Common myeloid progenitor, CD34-positive (primary cell): ENCODE measurements at regions of chr1 and their contacts with region 1.

Region 1: DNA sequence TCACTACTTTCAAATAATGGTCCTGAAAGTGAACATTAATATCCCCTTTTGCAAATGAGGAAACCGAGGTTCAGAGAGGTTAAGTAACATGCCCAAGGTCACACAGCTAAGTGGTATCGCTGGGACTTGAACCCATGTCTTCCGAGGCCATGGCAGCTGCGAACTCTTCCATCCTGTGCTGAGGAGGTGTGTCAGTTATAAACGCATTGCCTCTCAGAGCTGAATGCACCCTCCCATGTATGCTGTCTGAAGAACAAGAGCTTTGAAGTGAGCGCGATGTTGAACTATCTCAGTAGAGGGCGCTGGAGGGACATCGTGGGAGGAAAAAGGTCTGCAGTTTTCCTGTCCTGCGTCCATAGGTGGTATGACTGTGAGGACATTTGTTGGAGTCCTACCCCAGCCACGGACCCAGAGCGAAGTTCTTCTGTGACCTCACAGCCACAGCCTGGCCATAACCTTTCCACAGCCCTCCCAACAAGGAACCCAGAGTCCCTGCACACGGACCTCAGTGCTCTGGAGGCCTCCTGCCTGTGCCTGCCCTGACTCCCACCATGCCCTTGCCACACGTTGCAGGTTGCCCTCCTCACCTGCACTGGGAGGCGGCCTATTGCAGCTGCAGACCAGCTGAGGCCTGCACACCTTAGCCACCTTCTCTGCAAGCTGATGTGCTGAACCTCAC is 7.5 kb downstream of the MYOC start:
- DNase-seq: peak; percentile 79 to 93 (median 91)
- H3K4me3 ChIP-seq: peak overlapping the region in 2 of 7 experiments; percentile 9 to 59
- H3K27ac ChIP-seq: no peak overlapping the region
- H3K4me1 ChIP-seq: peaks cover 0 to 2% (median 0%) of the 10 kb centered on the region in 4 experiments
- H3K27me3 ChIP-seq: no peaks in the 10 kb centered on the region

Region 2: GRCh38 chr1:171654942-171655745 is 10.2 kb after region 1 on chr1:
- CTCF ChIA-PET with region 1: interaction called, 16 read pairs
- POLR2A ChIA-PET with region 1: no interaction called
- DNase-seq: peak; percentile 62 to 84 (median 81)
- H3K4me3 ChIP-seq: peak overlapping the region in 6 of 7 experiments; percentile 0 to 72 (median 38)
- H3K27ac ChIP-seq: no peak overlapping the region
- H3K4me1 ChIP-seq: peaks cover 0 to 15% (median 9%) of the 10 kb centered on the region in 4 experiments
- H3K27me3 ChIP-seq: peaks cover 0 to 2% (median 0%) of the 10 kb centered on the region in 5 experiments

Region 3: DNA sequence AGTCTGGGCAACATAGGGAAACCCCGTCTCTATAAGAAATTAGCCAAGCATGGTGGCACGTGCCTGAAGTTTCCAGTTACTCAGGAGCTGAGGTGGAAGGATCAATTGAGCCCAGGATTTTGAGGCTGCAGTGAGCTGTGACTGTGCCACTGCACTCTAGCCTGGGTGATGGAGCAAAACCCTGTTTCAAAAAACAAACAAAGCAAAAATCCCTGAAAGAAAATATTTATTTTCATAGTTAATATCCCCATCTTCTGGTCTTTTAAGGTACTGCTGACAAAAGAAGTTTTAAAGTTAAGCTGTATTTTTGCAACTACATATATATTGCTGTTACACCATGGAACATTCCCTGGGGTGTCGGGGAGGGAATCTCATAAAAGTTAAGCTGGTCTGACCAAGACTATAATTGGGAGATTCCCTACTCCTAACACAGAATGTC is 70.9 kb after region 1 on chr1:
- CTCF ChIA-PET with region 1: interaction called, 89 read pairs
- POLR2A ChIA-PET with region 1: no interaction called
- DNase-seq: peak in 2 of 3 donors; percentile 36 to 49
- H3K4me3 ChIP-seq: no peak overlapping the region
- H3K27ac ChIP-seq: no peak overlapping the region
- H3K4me1 ChIP-seq: no peaks in the 10 kb centered on the region
- H3K27me3 ChIP-seq: no peaks in the 10 kb centered on the region

Region 4: DNA sequence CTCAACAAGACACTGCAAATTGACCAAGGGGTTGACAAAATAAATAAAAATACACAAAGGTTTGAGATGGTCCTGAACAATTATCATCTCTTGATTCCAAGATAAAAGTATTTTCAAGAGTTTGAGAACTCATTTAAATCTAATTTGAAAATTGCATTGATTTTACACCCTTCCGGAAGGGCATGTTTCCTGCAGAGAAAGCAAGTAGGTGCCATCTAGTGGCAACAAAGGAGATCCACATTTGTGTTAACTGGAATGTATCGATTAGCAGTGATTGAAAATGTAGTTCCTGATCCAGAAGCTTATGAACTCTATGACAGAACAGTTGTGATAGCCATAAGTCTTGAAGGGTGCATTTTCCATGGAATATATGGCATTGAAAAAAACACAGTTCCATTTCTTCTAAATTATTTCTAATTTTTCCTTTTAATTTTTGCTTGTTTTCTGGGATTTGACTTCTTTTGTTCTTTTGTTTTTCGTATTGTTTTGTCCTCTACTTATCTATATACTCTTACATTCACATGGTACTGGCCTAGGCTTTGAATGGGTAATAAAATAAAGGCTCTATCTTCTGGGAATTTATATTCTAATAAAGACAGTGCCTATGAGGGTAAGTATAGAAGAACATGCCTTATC is 340.0 kb after region 1 on chr1:
- CTCF ChIA-PET with region 1: interaction called, 24 read pairs
- POLR2A ChIA-PET with region 1: no interaction called
- DNase-seq: peak; percentile 46 to 56 (median 49)
- H3K4me3 ChIP-seq: no peak overlapping the region
- H3K27ac ChIP-seq: no peak overlapping the region
- H3K4me1 ChIP-seq: peaks cover 0 to 10% (median 0%) of the 10 kb centered on the region in 4 experiments
- H3K27me3 ChIP-seq: no peaks in the 10 kb centered on the region